PC-9 (cell line): ENCODE measurements at regions of chr12 and their contacts with region 1.

Region 1: GRCh38 chr12:78916845-78917480 is 52.4 kb downstream of the SYT1 start:
- DNase-seq: peak; percentile 48 to 61
- H3K4me3 ChIP-seq: no peak overlapping the region
- H3K27ac ChIP-seq: peak overlapping the region; percentile 43
- H3K4me1 ChIP-seq: peaks cover 28% of the 10 kb centered on the region
- H3K27me3 ChIP-seq: no peaks in the 10 kb centered on the region
- CTCF ChIP-seq: no peak

Region 2: GRCh38 chr12:79083181-79083580 is 166.2 kb after region 1 on chr12:
- CTCF ChIA-PET with region 1: no interaction called
- POLR2A ChIA-PET with region 1: no interaction called
- intact Hi-C with region 1: loop called (anchors 10 kb)
- DNase-seq: no peak
- H3K4me3 ChIP-seq: no peak overlapping the region
- H3K27ac ChIP-seq: no peak overlapping the region
- H3K4me1 ChIP-seq: peaks cover 10% of the 10 kb centered on the region; the same call in 1 of the 2 replicates
- H3K27me3 ChIP-seq: no peaks in the 10 kb centered on the region
- CTCF ChIP-seq: no peak